ENCODE measurements at regions of chr17 and their contacts with region 1.

Region 1: GRCh38 chr17:7561028-7561575 is 617 bp upstream of the SENP3 start:
- DNase-seq: peak; percentile 92
- H3K4me3 Mint-ChIP-seq: peak overlapping the region; percentile 81
- H3K27ac Mint-ChIP-seq: peak overlapping the region; percentile 91
- H3K4me1 Mint-ChIP-seq: peaks cover 42% of the 10 kb centered on the region
- H3K27me3 Mint-ChIP-seq: no peaks in the 10 kb centered on the region
- CTCF ChIP-seq: peak; percentile 88

Region 2: GRCh38 chr17:7280519-7281429 is 280.3 kb before region 1 on chr17:
- CTCF ChIA-PET with region 1: no interaction called
- POLR2A ChIA-PET with region 1: interaction called, 3 read pairs
- intact Hi-C with region 1: loop called (anchors 1 kb)
- DNase-seq: peak; percentile 88
- H3K4me3 Mint-ChIP-seq: peak overlapping the region; percentile 72
- H3K27ac Mint-ChIP-seq: no peak overlapping the region
- H3K4me1 Mint-ChIP-seq: peaks cover 6% of the 10 kb centered on the region
- H3K27me3 Mint-ChIP-seq: no peaks in the 10 kb centered on the region
- CTCF ChIP-seq: peak; percentile 96

Region 3: GRCh38 chr17:7444682-7445618 is 116.2 kb before region 1 on chr17 and contains the start of gene CHRNB1:
- CTCF ChIA-PET with region 1: interaction called, 16 read pairs
- POLR2A ChIA-PET with region 1: interaction called, 11 read pairs
- intact Hi-C with region 1: no loop called
- DNase-seq: no peak
- H3K4me3 Mint-ChIP-seq: peak within 1 kb of the TSS; percentile 31
- H3K27ac Mint-ChIP-seq: peak within 1 kb of the TSS; percentile 90
- H3K4me1 Mint-ChIP-seq: peaks cover 11% of the 10 kb centered on the region
- H3K27me3 Mint-ChIP-seq: no peaks in the 10 kb centered on the region
- CTCF ChIP-seq: no peak
- total RNA-seq, gene CHRNB1: 3.3 and 7.8 TPM in 2 replicates

Region 4: DNA sequence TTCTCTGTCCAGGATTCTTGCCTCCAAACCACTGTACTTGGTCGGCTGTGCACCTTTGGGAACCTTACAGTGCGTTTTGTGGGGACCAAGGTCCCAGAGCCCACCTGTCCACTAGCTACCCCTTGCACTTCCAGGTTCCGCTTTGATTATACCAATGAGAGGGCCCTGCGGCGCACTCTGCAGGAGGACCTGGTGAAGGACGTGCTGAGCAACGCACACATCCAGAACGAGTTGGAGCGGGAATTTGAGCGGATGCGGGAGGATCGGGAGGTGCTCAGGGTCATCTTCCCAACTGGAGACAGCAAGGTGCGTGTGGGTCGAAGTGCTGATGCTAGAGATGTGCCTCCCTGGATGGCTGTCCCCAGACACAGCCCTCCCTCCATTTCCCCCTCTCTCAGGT is 58.1 kb before region 1 on chr17:
- CTCF ChIA-PET with region 1: interaction called, 36 read pairs
- POLR2A ChIA-PET with region 1: interaction called, 5 read pairs
- intact Hi-C with region 1: no loop called
- DNase-seq: no peak
- H3K4me3 Mint-ChIP-seq: no peak overlapping the region
- H3K27ac Mint-ChIP-seq: no peak overlapping the region
- H3K4me1 Mint-ChIP-seq: no peaks in the 10 kb centered on the region
- H3K27me3 Mint-ChIP-seq: no peaks in the 10 kb centered on the region
- CTCF ChIP-seq: peak; percentile 23

Region 5: DNA sequence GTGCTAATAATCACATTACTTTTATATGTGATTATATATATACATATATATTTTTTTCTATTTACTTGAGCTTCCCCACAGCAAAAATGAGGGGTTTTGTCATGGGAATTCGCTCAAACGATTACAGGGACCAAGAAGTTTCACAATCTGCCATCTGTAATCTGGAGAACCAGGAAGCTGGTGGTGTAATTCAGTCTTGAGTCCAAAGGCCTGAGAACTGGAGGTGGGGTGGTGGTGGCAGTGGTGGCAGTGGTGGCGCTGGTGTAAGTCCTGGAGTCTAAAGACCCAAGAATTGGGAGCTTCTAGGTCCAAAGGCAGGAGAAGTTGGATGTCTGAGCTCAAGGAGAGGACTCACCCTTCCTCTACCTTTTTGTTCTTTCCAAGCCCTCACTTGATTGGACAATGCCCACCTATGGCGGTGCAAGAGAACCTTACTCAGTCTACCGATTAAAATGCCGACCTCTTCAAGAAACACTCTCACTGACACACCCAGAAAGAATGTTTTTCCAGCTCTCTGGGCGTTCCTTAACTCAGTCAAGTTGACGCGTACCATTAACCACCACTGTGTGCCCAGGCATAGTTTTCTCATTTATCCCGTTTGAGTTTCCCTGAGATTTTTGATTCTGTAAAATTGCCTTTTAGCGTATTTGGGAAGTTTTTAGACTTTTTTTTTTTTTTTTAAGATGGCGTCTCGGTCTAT is 45.0 kb before region 1 on chr17:
- CTCF ChIA-PET with region 1: interaction called, 123 read pairs
- POLR2A ChIA-PET with region 1: interaction called, 65 read pairs
- intact Hi-C with region 1: loop called (anchors 1 kb)
- DNase-seq: no peak
- H3K4me3 Mint-ChIP-seq: no peak overlapping the region
- H3K27ac Mint-ChIP-seq: no peak overlapping the region
- H3K4me1 Mint-ChIP-seq: no peaks in the 10 kb centered on the region
- H3K27me3 Mint-ChIP-seq: no peaks in the 10 kb centered on the region
- CTCF ChIP-seq: no peak

Region 6: DNA sequence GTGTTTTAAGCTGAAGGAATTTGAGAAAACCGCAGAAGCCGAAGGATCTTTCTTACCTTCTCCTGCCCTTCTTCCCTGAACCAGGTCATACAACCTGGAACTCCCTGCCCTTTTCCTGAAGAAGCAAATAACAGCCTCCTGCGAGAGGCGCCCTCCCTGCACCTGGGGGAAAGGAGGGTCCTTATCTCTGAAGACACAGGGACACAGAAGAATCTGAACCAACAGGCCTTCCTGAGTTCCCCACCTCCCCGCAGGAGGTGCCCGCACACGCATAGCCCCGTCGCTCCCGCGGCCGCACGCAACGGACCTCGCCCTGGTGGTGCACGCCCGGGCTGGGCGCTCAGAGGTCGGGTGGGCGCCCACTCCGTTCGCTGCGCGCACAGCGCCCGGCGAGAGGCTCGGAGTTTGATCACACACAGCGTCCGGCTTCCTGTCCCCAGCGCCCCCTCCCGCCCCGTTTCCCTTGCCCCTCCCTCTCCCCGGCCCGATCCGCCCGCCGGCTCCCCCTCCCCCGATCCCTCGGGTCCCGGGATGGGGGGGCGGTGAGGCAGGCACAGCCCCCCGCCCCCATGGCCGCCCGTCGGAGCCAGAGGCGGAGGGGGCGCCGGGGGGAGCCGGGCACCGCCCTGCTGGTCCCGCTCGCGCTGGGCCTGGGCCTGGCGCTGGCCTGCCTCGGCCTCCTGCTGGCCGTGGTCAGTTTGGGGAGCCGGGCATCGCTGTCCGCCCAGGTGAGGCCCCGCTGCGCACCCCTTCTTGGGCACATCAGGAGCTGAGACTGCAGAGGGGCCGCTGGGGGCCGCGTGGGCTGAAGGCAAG is 12.3 kb before region 1 on chr17 and contains the start of gene TNFSF12:
- CTCF ChIA-PET with region 1: interaction called, 14 read pairs
- POLR2A ChIA-PET with region 1: interaction called, 12 read pairs
- intact Hi-C with region 1: no loop called
- DNase-seq: peak; percentile 30
- H3K4me3 Mint-ChIP-seq: peak within 1 kb of the TSS; percentile 62
- H3K27ac Mint-ChIP-seq: no peak within 1 kb of the TSS
- H3K4me1 Mint-ChIP-seq: no peaks in the 10 kb centered on the region
- H3K27me3 Mint-ChIP-seq: peaks cover 2% of the 10 kb centered on the region
- CTCF ChIP-seq: no peak
- total RNA-seq, gene TNFSF12: 3.5 and 3.9 TPM in 2 replicates

Region 7: GRCh38 chr17:7583253-7584109 is 22.4 kb after region 1 on chr17 and contains the start of gene MPDU1:
- CTCF ChIA-PET with region 1: interaction called, 21 read pairs
- POLR2A ChIA-PET with region 1: interaction called, 38 read pairs
- intact Hi-C with region 1: no loop called
- DNase-seq: peak; percentile 98
- H3K4me3 Mint-ChIP-seq: peak within 1 kb of the TSS; percentile 93
- H3K27ac Mint-ChIP-seq: peak within 1 kb of the TSS; percentile 100
- H3K4me1 Mint-ChIP-seq: peaks cover 56% of the 10 kb centered on the region
- H3K27me3 Mint-ChIP-seq: no peaks in the 10 kb centered on the region
- CTCF ChIP-seq: no peak
- total RNA-seq, gene MPDU1: 52.0 and 56.5 TPM in 2 replicates

Measured in MCF 10A (cell line).